ENCODE measurements at regions of chr20 and their contacts with region 1.

Region 1: DNA sequence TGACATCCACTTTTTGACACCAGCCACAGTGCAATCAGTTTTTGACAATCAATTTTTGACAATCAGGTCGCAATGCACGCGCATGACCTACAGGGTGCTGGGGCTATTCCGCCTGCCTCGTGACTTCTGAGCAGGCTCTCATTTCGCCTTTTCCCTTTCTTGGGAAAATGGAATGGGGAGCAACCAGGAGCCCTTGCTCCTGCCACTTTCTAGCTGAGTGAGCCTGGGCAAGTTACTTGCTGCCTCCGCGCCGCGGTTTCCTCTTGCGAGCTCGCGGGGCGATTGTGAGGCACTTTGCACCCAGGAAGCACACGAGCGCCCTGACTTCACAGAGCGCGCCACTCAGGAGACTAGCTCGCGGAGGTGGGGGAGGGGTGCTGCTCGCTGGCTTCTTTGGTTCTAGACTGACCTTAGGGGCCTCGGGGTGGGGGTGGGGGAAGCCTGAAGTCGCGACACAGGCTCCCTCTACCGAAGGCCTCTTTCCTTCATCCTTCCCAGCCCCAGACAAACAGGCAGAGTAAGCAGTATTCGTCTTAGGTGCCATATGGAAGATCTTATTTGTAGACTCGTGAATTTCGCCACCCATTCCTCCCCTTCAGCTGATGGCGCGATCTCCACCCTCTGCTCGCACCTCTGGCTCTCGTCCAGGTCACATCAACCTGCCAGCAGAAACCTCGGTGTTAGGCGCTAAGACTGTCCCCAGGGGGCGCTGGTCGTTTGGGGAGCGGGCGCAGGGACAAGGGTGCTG is 4.6 kb downstream of the TP53TG5 start:
- DNase-seq: no peak
- H3K4me3 ChIP-seq: peak overlapping the region; percentile 55
- CTCF ChIP-seq: peak; percentile 95

Region 2: GRCh38 chr20:45341939-45342859 is 31.3 kb before region 1 on chr20:
- CTCF ChIA-PET with region 1: interaction called, 4 read pairs
- POLR2A ChIA-PET with region 1: interaction called, 10 read pairs
- DNase-seq: no peak
- H3K4me3 ChIP-seq: peak overlapping the region; percentile 35
- CTCF ChIP-seq: no peak

Region 3: DNA sequence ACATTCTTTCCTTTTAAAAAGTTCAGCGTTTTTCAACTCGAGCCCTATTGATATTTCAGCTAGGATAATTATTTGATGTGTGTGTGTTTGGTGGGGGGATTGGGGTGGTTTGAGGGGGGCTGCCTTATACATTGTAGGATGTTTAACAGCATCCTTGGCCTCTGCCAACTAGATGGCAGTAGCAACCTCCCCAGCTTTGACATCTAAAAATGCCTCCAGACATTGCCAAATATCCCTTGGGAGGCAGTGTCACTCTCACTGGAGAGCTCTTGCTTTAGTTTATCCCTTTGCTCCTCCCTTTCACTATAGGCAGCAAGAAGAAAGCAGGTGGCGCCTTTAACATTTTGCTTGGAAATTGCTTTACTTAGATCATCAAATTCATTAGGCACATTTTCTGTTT is 19.2 kb after region 1 on chr20:
- CTCF ChIA-PET with region 1: interaction called, 55 read pairs
- POLR2A ChIA-PET with region 1: no interaction called
- DNase-seq: no peak
- H3K4me3 ChIP-seq: no peak overlapping the region
- CTCF ChIP-seq: no peak

Region 4: DNA sequence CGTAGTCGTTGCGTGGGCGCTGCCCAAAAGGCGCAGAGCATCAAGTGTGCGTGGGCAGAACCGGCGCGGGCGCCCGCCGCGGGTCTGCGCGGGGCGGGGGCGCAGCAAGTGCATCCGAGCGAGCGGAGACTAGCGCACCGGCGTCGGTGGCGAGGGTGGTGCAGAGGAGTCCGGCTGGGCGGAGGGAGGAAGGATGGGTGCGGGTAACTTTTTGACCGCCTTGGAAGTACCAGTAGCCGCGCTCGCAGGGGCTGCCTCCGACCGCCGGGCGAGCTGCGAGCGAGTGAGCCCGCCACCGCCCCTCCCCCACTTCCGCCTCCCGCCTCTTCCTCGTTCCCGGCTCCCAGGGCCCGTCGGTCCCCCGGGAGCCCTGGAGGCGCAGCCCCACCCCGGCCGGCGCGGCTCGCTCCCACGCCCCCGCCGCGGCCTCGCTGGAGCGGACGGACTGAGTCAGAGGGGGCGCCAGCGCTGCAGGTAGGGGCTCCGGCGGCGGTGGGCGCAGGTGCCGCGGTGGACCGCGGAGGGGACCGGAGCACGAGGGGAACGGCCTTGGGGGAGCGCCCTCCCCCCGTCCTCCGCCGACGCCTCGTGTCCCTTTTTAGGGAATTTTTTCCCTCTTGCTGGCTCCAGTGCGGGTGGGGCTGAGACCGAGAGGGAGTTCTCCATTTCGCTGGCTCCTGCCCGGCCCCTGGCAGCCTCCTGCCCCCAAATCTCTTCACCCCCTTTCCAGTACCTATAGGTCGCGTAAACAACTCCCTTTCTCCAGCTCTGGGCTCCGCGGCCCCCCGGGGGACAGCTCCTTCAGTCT is 32.9 kb after region 1 on chr20:
- CTCF ChIA-PET with region 1: interaction called, 21 read pairs
- POLR2A ChIA-PET with region 1: no interaction called
- DNase-seq: no peak
- H3K4me3 ChIP-seq: peak overlapping the region; percentile 66
- CTCF ChIP-seq: no peak

Region 5: GRCh38 chr20:45415774-45416637 is 42.5 kb after region 1 on chr20 and contains the start of gene PIGT:
- CTCF ChIA-PET with region 1: interaction called, 12 read pairs
- POLR2A ChIA-PET with region 1: no interaction called
- DNase-seq: no peak
- H3K4me3 ChIP-seq: peak within 1 kb of the TSS; percentile 97
- CTCF ChIP-seq: no peak

Region 6: GRCh38 chr20:45450097-45450818 is 76.7 kb after region 1 on chr20:
- CTCF ChIA-PET with region 1: interaction called, 36 read pairs
- POLR2A ChIA-PET with region 1: no interaction called
- DNase-seq: no peak
- H3K4me3 ChIP-seq: no peak overlapping the region
- CTCF ChIP-seq: peak; percentile 49

Measured in AG04449 (cell line).